Lower leg skin (tissue), 4 donors: ENCODE measurements at regions of chr2 and their contacts with region 1.

Region 1: DNA sequence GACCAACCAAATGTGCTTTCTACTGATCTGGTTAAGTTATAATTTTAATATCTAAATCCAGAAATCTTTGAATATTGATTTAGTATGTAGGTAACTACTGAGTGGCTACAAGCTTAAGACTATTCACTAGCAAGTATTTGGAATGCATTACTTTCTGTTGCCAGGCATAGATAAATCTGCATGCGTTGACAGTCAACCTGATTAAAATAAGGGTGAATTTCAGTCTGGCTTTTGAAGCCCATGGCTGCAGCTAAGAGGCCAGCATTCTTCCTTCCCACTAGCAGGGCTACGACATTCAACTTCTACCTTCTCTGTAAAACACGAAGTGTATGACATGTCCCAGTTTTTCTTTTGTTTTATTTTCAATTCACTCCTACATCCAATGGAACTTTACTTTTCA is 340.6 kb downstream of the EPHA4 start:
- DNase-seq: no peak
- H3K4me3 ChIP-seq: no peak overlapping the region
- CTCF ChIP-seq: no peak
- POLR2A ChIP-seq: no peak

Region 2: GRCh38 chr2:220489121-220489520 is 742.4 kb before region 1 on chr2:
- intact Hi-C with region 1: no loop called
- DNase-seq: no peak
- H3K4me3 ChIP-seq: no peak overlapping the region
- CTCF ChIP-seq: no peak
- POLR2A ChIP-seq: no peak

Region 3: GRCh38 chr2:222548992-222549391 is 1317.5 kb after region 1 on chr2:
- intact Hi-C with region 1: loop called (anchors 5 kb)
- DNase-seq: no peak
- H3K4me3 ChIP-seq: no peak overlapping the region
- CTCF ChIP-seq: no peak
- POLR2A ChIP-seq: no peak